Dendritic cell treated with granulocyte-macrophage colony-stimulating factor and Interleukin-4, amounts not matched to agents 40 ng/mL and 50 ng/mL, for 4 days (primary cell): ENCODE measurements at regions of chr14 and their contacts with region 1.

Region 1: DNA sequence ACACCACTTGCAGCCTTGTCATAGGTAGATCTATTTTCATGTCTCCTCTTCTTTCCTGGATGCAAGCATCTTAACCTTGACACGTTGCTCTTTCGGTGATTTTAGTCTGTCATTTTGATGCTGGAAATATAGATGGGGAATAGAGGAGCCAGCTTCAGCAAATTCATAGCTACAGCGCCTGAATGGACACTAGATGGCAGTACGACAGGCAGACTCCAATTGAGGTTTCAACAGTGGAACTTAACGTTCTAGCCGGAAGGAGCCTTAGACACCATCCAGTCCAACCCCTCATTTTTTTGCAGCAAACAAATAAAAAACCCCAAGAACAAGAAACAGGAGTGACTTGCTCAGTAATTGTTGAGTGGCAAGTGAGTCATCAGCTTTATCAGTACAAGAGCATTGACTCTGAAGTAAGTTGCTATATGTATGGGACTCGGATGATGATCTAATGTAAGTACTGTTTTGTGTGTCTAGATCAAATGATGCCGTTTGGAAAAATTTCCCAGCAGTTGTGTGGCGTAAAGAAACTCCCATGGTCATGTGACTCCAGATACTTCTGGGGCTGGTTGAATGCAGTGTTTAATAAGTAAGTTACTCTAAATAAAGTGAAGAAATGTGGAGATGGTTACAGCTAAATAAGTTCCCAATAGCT is 9.0 kb downstream of the DMAC2L start:
- H3K4me3 Mint-ChIP-seq: no peak overlapping the region
- H3K27ac Mint-ChIP-seq: no peak overlapping the region
- H3K4me1 Mint-ChIP-seq: peaks cover 7% of the 10 kb centered on the region
- H3K27me3 Mint-ChIP-seq: no peaks in the 10 kb centered on the region

Region 2: GRCh38 chr14:50396631-50397390 is 75.7 kb after region 1 on chr14 and contains the start of gene CDKL1:
- intact Hi-C with region 1: loop called (anchors 2 kb)
- H3K4me3 Mint-ChIP-seq: peak within 1 kb of the TSS; percentile 76
- H3K27ac Mint-ChIP-seq: peak within 1 kb of the TSS; percentile 69
- H3K4me1 Mint-ChIP-seq: peaks cover 25% of the 10 kb centered on the region
- H3K27me3 Mint-ChIP-seq: peaks cover 7% of the 10 kb centered on the region

Region 3: DNA sequence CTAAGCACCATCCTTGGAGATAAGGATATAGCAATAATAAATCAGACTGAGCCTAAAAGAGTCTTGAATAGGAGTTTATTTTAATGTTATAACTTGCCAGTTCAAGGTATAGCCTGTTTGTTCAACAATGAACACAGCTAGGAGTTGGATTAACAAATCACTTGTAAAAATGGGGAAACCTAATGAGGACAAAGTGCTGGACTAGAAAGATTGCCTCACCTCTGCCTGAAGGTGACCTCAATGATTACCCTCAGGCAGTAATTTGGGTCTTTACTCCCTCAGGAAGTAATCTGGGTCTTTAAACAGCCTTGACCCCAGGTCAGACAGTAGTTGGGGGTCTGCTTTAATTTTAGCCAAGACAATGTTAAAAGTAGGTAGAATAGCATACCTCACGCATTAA is 111.0 kb after region 1 on chr14:
- intact Hi-C with region 1: loop called (anchors 5 kb)
- H3K4me3 Mint-ChIP-seq: no peak overlapping the region
- H3K27ac Mint-ChIP-seq: no peak overlapping the region
- H3K4me1 Mint-ChIP-seq: no peaks in the 10 kb centered on the region
- H3K27me3 Mint-ChIP-seq: no peaks in the 10 kb centered on the region

Region 4: GRCh38 chr14:50532502-50533240 is 211.5 kb after region 1 on chr14 and contains the start of gene MAP4K5:
- intact Hi-C with region 1: loop called (anchors 1 kb)
- H3K4me3 Mint-ChIP-seq: peak within 1 kb of the TSS; percentile 87
- H3K27ac Mint-ChIP-seq: peak within 1 kb of the TSS; percentile 66
- H3K4me1 Mint-ChIP-seq: peaks cover 53% of the 10 kb centered on the region
- H3K27me3 Mint-ChIP-seq: no peaks in the 10 kb centered on the region